Esophagus squamous epithelium (tissue), 5 donors: ENCODE measurements at regions of chr5 and their contacts with region 1.

Region 1: GRCh38 chr5:88675708-88676636 is 207.0 kb downstream of the MEF2C start:
- DNase-seq: no peak
- H3K4me3 ChIP-seq: peak overlapping the region; percentile 7 to 60 (median 41)
- H3K27ac ChIP-seq: no peak overlapping the region
- H3K4me1 ChIP-seq: peaks cover 17 to 56% (median 26%) of the 10 kb centered on the region in 3 donors
- H3K27me3 ChIP-seq: peaks cover 10 to 100% (median 75%) of the 10 kb centered on the region in 4 donors
- CTCF ChIP-seq: no peak
- POLR2A ChIP-seq: no peak

Region 2: GRCh38 chr5:87780831-87781760 is 894.9 kb before region 1 on chr5:
- intact Hi-C with region 1: loop called (anchors 5 kb)
- DNase-seq: peak; percentile 0
- H3K4me3 ChIP-seq: no peak overlapping the region
- H3K27ac ChIP-seq: no peak overlapping the region
- H3K4me1 ChIP-seq: peaks cover 0 to 6% (median 0%) of the 10 kb centered on the region in 3 donors
- H3K27me3 ChIP-seq: peaks cover 0 to 45% (median 0%) of the 10 kb centered on the region in 4 donors
- CTCF ChIP-seq: peak; percentile 50 to 88 (median 80)
- POLR2A ChIP-seq: no peak

Region 3: DNA sequence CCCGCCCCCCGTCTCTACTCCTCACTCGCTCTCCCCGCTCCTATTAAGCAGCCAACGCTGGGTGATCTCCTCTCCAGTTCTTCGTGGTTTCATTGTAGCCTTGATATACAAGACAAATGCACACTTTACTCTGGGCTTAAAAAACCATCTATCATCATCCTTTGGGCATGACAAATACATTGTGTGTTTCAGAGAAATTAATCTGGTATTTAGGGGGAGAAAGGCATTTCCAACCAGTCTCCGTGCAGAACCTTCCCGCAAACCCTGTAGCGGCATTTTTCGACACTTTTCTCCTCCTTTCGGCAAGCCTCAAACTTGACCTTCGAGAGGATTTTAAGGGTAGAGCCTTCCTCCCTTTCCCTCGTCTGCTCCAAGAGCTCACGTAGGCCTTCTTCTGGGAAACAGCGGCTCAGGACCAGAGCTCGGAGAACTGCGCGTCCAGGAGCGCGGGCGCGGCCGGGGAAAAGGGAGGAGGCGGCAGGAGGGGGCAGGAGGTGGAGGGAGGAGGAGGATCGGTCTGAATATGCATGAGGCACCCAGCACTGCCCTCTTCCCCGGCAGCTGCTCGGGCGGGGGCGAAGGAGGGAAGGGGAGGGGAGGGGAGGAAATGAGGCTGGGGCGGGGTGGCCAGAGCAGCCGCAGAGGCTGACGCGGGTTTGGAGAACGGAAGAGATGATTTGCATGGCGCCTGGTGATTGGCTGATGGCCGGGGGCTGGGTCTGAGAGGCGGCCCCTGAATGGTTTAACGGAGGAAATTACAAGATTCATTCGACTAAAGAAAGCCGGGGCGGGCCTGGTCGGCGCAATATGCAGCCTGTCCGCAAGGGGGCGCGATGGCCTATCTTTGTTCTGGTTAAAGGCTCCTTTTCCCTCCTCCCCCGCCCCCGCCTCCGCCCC is 534.9 kb before region 1 on chr5:
- intact Hi-C with region 1: loop called (anchors 10 kb)
- DNase-seq: peak; percentile 44
- H3K4me3 ChIP-seq: peak overlapping the region; percentile 25 to 65 (median 50)
- H3K27ac ChIP-seq: peak overlapping the region in 3 of 4 donors; percentile 23 to 63 (median 38)
- H3K4me1 ChIP-seq: peaks cover 15 to 64% (median 31%) of the 10 kb centered on the region in 3 donors
- H3K27me3 ChIP-seq: peaks cover 4 to 92% (median 9%) of the 10 kb centered on the region in 4 donors
- CTCF ChIP-seq: peak; percentile 44 to 71 (median 54)
- POLR2A ChIP-seq: no peak

Region 4: GRCh38 chr5:88262116-88262515 is 413.9 kb before region 1 on chr5:
- intact Hi-C with region 1: no loop called
- DNase-seq: no peak
- H3K4me3 ChIP-seq: no peak overlapping the region
- H3K27ac ChIP-seq: no peak overlapping the region
- H3K4me1 ChIP-seq: peaks cover 0 to 10% (median 0%) of the 10 kb centered on the region in 3 donors
- H3K27me3 ChIP-seq: no peaks in the 10 kb centered on the region
- CTCF ChIP-seq: no peak
- POLR2A ChIP-seq: no peak